Mammary epithelial cell (primary cell): ENCODE measurements at regions of chr14 and their contacts with region 1.

Region 1: DNA sequence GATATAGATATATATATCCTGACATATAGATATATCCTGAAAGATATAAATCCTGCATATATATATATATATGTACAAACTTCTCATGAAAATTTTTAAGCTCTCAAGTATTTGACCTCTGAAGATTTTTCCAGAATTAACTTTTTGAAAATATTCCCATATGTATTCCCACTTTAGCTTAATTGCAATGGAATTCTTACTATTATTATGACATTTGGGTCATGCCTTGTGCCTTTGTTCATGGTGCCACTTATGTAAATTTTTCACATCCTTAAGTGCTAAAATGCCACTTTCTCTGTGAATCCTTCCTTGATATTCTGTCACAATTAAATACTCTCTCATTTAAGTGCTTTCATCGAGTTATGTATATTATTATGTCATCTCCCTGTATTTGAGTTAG is 398.2 kb upstream of the SEL1L start:
- DNase-seq: no peak
- H3K4me3 ChIP-seq: no peak overlapping the region
- H3K27ac ChIP-seq: no peak overlapping the region
- H3K4me1 ChIP-seq: no peaks in the 10 kb centered on the region
- H3K27me3 ChIP-seq: no peaks in the 10 kb centered on the region
- CTCF ChIP-seq: no peak

Region 2: GRCh38 chr14:81890020-81890419 is 41.8 kb before region 1 on chr14:
- CTCF ChIA-PET with region 1: no interaction called
- dilution Hi-C with region 1: no loop called
- in situ Hi-C with region 1: no loop called
- intact Hi-C with region 1: loop called (anchors 2 kb)
- DNase-seq: no peak
- H3K4me3 ChIP-seq: no peak overlapping the region
- H3K27ac ChIP-seq: no peak overlapping the region
- H3K4me1 ChIP-seq: no peaks in the 10 kb centered on the region
- H3K27me3 ChIP-seq: no peaks in the 10 kb centered on the region
- CTCF ChIP-seq: no peak

Region 3: GRCh38 chr14:82180139-82180538 is 248.3 kb after region 1 on chr14:
- CTCF ChIA-PET with region 1: no interaction called
- dilution Hi-C with region 1: no loop called
- in situ Hi-C with region 1: no loop called
- intact Hi-C with region 1: no loop called
- DNase-seq: no peak
- H3K4me3 ChIP-seq: no peak overlapping the region
- H3K27ac ChIP-seq: no peak overlapping the region
- H3K4me1 ChIP-seq: no peaks in the 10 kb centered on the region
- H3K27me3 ChIP-seq: no peaks in the 10 kb centered on the region
- CTCF ChIP-seq: no peak